Astrocyte of the cerebellum (primary cell): ENCODE measurements at regions of chr21 and their contacts with region 1.

Region 1: DNA sequence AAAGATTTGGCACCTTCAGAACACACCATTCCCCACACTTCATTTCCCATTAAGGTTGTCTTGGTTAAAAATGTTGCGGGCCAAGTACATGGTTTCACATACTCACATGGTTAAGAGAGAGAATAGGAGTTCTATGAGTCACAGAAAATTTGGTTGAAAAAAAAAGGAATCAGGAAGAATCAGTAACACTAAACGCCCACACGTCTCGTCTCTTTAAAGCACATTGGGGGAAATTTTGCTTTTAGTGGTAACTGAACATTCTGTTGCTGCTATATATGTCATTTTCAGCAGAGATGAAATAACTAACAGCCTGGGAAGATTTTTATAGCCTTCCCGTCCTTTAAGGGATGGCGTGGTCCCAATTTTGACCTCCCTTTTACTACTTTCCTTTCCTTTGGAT is 132.9 kb upstream of the ERG start:
- DNase-seq: no peak
- H3K4me3 ChIP-seq: no peak overlapping the region
- CTCF ChIP-seq: no peak

Region 2: GRCh38 chr21:38306433-38307141 is 324.6 kb before region 1 on chr21:
- in situ Hi-C with region 1: no loop called
- DNase-seq: peak; percentile 64
- H3K4me3 ChIP-seq: no peak overlapping the region
- CTCF ChIP-seq: no peak

Region 3: GRCh38 chr21:38561613-38562581 is 69.3 kb before region 1 on chr21:
- in situ Hi-C with region 1: loop called (anchors 5 kb)
- DNase-seq: no peak
- H3K4me3 ChIP-seq: no peak overlapping the region
- CTCF ChIP-seq: no peak